ENCODE measurements at regions of chr3 and their contacts with region 1.

Region 1: DNA sequence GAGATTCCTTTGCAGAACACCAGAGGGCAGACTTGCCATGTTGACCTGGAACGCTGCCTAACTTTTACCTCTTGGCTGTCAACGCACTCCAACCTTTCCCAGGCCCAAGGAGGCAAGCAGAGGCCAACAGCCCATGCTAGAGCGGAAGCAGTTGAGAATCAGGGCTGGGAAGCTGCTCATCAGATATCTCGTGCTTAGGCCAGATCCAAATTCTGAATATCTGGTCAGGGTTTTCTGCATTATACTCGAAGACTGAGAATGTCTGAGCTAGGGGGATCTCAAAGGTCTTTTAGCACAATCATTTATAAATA is 2.5 kb downstream of the XIRP1 start:
- DNase-seq: peak; percentile 68
- H3K4me3 Mint-ChIP-seq: no peak overlapping the region
- H3K27ac Mint-ChIP-seq: no peak overlapping the region
- H3K4me1 Mint-ChIP-seq: peaks cover 15% of the 10 kb centered on the region
- H3K27me3 Mint-ChIP-seq: no peaks in the 10 kb centered on the region
- CTCF ChIP-seq: no peak

Region 2: DNA sequence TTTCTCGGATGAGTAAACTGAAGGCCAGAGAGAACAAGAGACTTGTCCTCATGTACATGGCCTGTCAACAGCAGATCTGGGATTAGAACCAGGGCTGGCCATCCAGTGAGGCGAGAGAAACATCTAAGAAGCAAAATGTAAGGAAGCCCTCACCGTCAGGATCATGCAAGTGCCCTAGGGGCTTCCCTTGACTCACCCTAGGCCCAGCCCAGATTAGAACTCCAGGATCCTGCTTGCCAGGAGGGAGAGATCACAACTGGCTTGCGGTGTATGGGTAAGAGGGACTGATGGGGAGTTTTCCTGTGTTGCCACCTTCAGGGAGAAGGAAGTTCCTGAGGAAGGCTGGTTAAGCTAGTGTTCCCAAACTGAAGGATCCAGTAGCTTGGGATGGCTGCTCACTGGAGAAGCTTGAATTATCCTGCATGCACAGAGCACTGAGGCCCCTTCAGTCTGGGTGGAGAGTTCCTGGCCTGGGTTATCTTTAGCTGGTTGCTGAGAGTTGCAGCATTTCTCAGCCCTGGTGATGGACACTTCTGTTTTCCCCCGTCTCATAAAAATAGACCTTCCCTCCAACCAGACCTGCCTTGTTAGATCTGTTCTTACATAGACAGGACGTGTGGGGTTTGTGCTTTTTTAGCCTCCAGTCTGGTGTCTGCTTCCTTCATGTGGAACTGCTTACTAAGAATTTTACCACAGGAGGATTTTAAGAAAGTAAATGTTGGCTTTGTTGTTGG is 30.7 kb after region 1 on chr3:
- CTCF ChIA-PET with region 1: no interaction called
- intact Hi-C with region 1: no loop called
- DNase-seq: no peak
- H3K4me3 Mint-ChIP-seq: no peak overlapping the region
- H3K27ac Mint-ChIP-seq: no peak overlapping the region
- H3K4me1 Mint-ChIP-seq: no peaks in the 10 kb centered on the region
- H3K27me3 Mint-ChIP-seq: peaks cover 90% of the 10 kb centered on the region
- CTCF ChIP-seq: no peak

Region 3: GRCh38 chr3:39378088-39378487 is 188.2 kb after region 1 on chr3:
- CTCF ChIA-PET with region 1: interaction called, 6 read pairs
- intact Hi-C with region 1: loop called (anchors 2 kb)
- DNase-seq: peak; percentile 71
- H3K4me3 Mint-ChIP-seq: no peak overlapping the region
- H3K27ac Mint-ChIP-seq: no peak overlapping the region
- H3K4me1 Mint-ChIP-seq: peaks cover 9% of the 10 kb centered on the region
- H3K27me3 Mint-ChIP-seq: no peaks in the 10 kb centered on the region
- CTCF ChIP-seq: peak; percentile 57